ENCODE measurements at regions of chr17 and their contacts with region 1.

Region 1: DNA sequence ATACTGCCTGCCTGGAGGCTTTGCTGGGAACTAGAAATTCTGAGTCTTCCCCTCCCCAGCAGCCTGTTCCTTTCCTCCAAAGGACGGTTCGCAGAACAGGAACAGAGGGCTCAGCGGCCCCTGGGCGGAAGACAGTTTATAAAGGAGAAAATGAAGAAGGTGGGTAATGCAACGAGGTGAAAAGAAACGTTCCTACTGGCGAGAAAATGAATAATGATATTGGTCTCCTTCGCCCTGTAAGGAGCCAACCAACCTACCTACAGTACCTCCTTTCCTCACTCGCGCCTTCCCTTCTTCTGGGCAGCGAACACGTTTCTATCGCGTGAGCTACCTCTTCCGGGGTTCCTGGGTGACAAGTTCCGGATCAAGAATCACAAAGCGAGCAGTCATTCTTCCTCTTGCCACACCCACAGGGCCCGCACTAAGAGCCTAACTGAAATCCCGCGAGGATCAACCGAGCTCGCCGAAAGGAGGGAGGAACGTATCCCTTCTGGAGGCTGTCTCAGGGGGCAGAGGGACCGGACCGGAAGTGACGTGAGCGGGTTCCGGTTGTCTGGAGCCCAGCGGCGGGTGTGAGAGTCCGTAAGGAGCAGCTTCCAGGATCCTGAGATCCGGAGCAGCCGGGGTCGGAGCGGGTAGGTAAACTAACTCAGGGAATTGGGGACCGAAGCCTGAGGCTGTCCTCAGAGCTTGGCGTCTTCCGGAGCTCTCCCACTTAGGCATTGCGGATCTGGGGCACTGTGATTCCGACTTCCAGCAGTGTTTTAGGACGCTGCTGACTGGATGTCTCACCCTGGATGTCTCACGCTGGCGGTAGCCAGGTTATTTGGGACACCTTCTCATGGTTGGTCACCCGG is at the starts of genes PTRH2 and VMP1:
- DNase-seq: peak; percentile 99 to 100
- H3K4me3 ChIP-seq: peak within 1 kb of the TSS; percentile 90
- H3K4me3 Mint-ChIP-seq: peak within 1 kb of the TSS; percentile 97
- H3K27ac Mint-ChIP-seq: peak within 1 kb of the TSS; percentile 98
- H3K4me1 ChIP-seq: peaks cover 11% of the 10 kb centered on the region
- H3K4me1 Mint-ChIP-seq: peaks cover 10% of the 10 kb centered on the region
- H3K27me3 ChIP-seq: no peaks in the 10 kb centered on the region
- H3K27me3 Mint-ChIP-seq: no peaks in the 10 kb centered on the region
- CTCF ChIP-seq: no peak
- total RNA-seq, gene PTRH2: 36.1 and 36.6 TPM in 2 replicates
- total RNA-seq, gene VMP1: 277 and 297 TPM in 2 replicates

Region 2: GRCh38 chr17:59521204-59522126 is 185.9 kb before region 1 on chr17:
- CTCF ChIA-PET with region 1: interaction called, 3 read pairs
- POLR2A ChIA-PET with region 1: no interaction called
- intact Hi-C with region 1: loop called (anchors 10 kb)
- DNase-seq: peak; percentile 63 to 78
- H3K4me3 ChIP-seq: no peak overlapping the region
- H3K4me3 Mint-ChIP-seq: peak overlapping the region; percentile 37
- H3K27ac Mint-ChIP-seq: no peak overlapping the region
- H3K4me1 ChIP-seq: no peaks in the 10 kb centered on the region
- H3K4me1 Mint-ChIP-seq: peaks cover 22% of the 10 kb centered on the region
- H3K27me3 ChIP-seq: no peaks in the 10 kb centered on the region
- H3K27me3 Mint-ChIP-seq: peaks cover 5% of the 10 kb centered on the region
- CTCF ChIP-seq: peak; percentile 81 to 87

Region 3: GRCh38 chr17:59619293-59620063 is 87.9 kb before region 1 on chr17 and contains the start of gene CLTC:
- CTCF ChIA-PET with region 1: no interaction called
- POLR2A ChIA-PET with region 1: interaction called, 19 read pairs
- intact Hi-C with region 1: loop called (anchors 2 kb)
- DNase-seq: peak; percentile 95
- H3K4me3 ChIP-seq: peak within 1 kb of the TSS; percentile 99
- H3K4me3 Mint-ChIP-seq: peak within 1 kb of the TSS; percentile 95
- H3K27ac Mint-ChIP-seq: peak within 1 kb of the TSS; percentile 100
- H3K4me1 ChIP-seq: peaks cover 51% of the 10 kb centered on the region
- H3K4me1 Mint-ChIP-seq: peaks cover 31% of the 10 kb centered on the region
- H3K27me3 ChIP-seq: no peaks in the 10 kb centered on the region
- H3K27me3 Mint-ChIP-seq: no peaks in the 10 kb centered on the region
- CTCF ChIP-seq: no peak
- total RNA-seq, gene CLTC: 289 and 302 TPM in 2 replicates

Region 4: DNA sequence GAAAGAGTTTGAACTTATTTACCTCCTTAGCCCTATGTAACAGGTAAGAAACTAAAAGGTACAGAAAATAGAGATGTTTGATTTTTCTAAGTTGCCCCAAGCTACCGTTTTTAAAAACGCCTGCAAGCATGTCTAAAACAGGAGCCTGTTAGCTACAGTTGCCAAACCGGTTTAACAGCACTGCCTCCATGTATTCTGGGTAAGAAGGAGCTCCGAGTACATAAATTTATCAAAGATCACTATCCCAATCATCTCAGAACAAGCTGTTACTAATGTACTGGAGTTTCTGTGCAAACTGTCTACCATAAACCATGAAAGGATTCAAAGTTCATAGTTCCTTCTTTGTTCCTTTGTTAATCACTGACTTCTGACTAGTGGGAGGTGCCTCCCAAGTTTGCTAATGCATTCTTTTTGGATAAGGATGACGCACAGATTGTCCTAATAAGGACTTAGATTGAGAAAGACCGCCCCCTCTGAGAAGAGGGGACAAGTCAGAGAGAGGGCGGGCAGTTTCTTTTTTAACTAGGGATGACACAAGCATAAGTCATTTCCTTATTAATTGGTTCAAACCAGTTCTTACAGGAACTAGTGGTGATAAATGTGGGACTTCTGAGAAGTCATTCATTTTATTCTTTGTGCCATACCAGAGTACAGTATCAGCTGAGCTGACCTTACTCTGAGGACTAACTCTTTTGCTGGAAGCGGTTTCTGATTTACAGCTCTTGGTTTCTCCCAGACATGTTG is 130.1 kb after region 1 on chr17:
- CTCF ChIA-PET with region 1: no interaction called
- POLR2A ChIA-PET with region 1: interaction called, 27 read pairs
- intact Hi-C with region 1: no loop called
- DNase-seq: peak; percentile 95 to 96
- H3K4me3 ChIP-seq: peak overlapping the region; percentile 49
- H3K4me3 Mint-ChIP-seq: peak overlapping the region; percentile 89
- H3K27ac Mint-ChIP-seq: peak overlapping the region; percentile 98
- H3K4me1 ChIP-seq: peaks cover 30% of the 10 kb centered on the region
- H3K4me1 Mint-ChIP-seq: peaks cover 41% of the 10 kb centered on the region
- H3K27me3 ChIP-seq: no peaks in the 10 kb centered on the region
- H3K27me3 Mint-ChIP-seq: peaks cover 2% of the 10 kb centered on the region
- CTCF ChIP-seq: no peak

Region 5: GRCh38 chr17:59846394-59847165 is 139.2 kb after region 1 on chr17:
- CTCF ChIA-PET with region 1: no interaction called
- POLR2A ChIA-PET with region 1: interaction called, 7 read pairs
- intact Hi-C with region 1: loop called (anchors 5 kb)
- DNase-seq: peak; percentile 79 to 80
- H3K4me3 ChIP-seq: no peak overlapping the region
- H3K4me3 Mint-ChIP-seq: peak overlapping the region; percentile 89
- H3K27ac Mint-ChIP-seq: peak overlapping the region; percentile 98
- H3K4me1 ChIP-seq: peaks cover 81% of the 10 kb centered on the region
- H3K4me1 Mint-ChIP-seq: peaks cover 68% of the 10 kb centered on the region
- H3K27me3 ChIP-seq: no peaks in the 10 kb centered on the region
- H3K27me3 Mint-ChIP-seq: no peaks in the 10 kb centered on the region
- CTCF ChIP-seq: no peak